OCI-LY7 (cell line): ENCODE measurements at regions of chr6 and their contacts with region 1.

Region 1: GRCh38 chr6:8063761-8064637 is at the start of gene BLOC1S5:
- DNase-seq: peak; percentile 98
- H3K4me3 ChIP-seq: peak within 1 kb of the TSS; percentile 94
- H3K27ac ChIP-seq: peak within 1 kb of the TSS; percentile 64
- H3K4me1 ChIP-seq: peaks cover 27% of the 10 kb centered on the region
- CTCF ChIP-seq: no peak; the same call in 1 of the 2 replicates
- total RNA-seq, gene BLOC1S5: 22.6 and 30.0 TPM in 2 replicates

Region 2: GRCh38 chr6:7389451-7390225 is 674.4 kb before region 1 on chr6 and contains the starts of genes CAGE1 and RIOK1:
- CTCF ChIA-PET with region 1: no interaction called
- POLR2A ChIA-PET with region 1: no interaction called
- intact Hi-C with region 1: loop called (anchors 5 kb)
- DNase-seq: peak; percentile 94
- H3K4me3 ChIP-seq: peak within 1 kb of the TSS; percentile 83
- H3K27ac ChIP-seq: peak within 1 kb of the TSS; percentile 84
- H3K4me1 ChIP-seq: peaks cover 21% of the 10 kb centered on the region
- CTCF ChIP-seq: no peak
- total RNA-seq, gene CAGE1: 0.44 and 1.1 TPM in 2 replicates
- total RNA-seq, gene RIOK1: 55.0 and 85.0 TPM in 2 replicates

Region 3: DNA sequence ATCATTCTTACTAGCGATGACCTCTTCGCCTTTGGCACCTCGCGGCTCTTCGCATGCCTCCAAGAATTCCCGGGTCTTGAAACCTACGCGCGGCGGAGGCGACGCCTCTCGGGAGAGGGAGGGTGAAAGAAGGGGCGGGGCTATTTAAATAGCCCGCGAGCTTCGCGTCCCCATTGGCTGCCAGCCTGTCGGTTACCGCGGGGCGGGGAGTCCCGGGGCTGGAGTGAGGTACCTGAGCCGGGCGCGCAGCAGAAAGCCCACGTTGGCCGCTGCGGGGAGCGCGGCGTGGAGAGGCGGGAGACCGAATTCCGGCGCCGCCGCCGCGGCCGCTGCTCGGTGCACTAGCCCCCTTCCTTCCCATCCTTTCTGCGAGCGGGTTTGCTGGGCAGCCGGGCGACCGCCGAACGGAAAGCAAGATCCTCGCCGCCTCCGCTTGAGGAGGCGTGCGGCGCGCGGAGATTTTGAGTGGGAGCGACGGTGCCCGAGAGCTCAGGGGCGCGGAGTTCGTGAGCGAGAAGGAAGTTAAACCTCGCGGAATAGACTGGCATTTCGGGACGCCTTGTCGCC is 338.1 kb before region 1 on chr6 and contains the start of gene BMP6:
- CTCF ChIA-PET with region 1: no interaction called
- POLR2A ChIA-PET with region 1: no interaction called
- intact Hi-C with region 1: loop called (anchors 2 kb)
- DNase-seq: peak; percentile 69
- H3K4me3 ChIP-seq: peak within 1 kb of the TSS; percentile 64
- H3K27ac ChIP-seq: no peak within 1 kb of the TSS
- H3K4me1 ChIP-seq: peaks cover 19% of the 10 kb centered on the region
- CTCF ChIP-seq: no peak
- total RNA-seq, gene BMP6: 0.10 and 0.38 TPM in 2 replicates

Region 4: GRCh38 chr6:7899101-7899888 is 164.7 kb before region 1 on chr6:
- CTCF ChIA-PET with region 1: no interaction called
- POLR2A ChIA-PET with region 1: interaction called, 4 read pairs
- intact Hi-C with region 1: loop called (anchors 5 kb)
- DNase-seq: peak; percentile 59
- H3K4me3 ChIP-seq: no peak overlapping the region
- H3K27ac ChIP-seq: peak overlapping the region; percentile 78
- H3K4me1 ChIP-seq: peaks cover 65% of the 10 kb centered on the region
- CTCF ChIP-seq: peak; percentile 76

Region 5: DNA sequence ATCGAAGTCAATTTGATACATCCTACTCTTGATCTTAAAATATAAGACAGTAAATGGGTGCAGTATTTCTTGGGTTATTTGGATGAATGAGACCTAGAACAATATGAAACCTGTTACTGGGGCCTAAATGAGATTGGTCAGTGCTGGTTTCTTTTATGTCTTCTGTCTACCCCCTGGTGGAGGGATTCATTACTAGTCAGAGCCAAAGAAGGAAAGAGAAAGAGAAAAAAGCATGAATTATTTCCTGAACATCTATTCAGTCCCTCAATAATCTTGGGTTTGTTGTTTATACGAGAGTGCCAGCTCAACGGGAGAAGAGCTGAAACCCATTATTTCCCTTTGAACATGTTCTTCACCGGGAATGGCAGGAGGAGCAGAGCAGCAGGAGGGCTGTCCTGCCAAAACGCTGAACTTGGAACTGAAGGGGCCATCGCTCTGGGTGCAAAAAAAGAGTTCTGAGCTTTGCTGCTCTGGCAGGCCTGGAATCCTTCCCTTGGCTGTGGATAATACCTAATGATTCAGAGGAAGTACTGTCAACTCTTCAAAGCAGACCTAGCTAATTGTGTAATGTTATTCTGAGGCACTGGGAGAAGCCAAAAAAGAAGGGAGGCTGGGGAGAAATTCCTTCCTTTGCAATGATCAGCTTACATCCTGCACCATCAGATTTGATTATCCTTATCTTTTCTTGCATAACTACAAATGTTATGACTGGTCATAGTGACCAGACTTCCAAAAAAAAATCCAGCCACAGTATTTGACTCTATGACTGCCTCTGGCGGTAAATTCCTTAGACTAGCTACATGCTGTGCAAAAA is 71.8 kb before region 1 on chr6:
- CTCF ChIA-PET with region 1: no interaction called
- POLR2A ChIA-PET with region 1: no interaction called
- intact Hi-C with region 1: loop called (anchors 2 kb)
- DNase-seq: peak; percentile 76
- H3K4me3 ChIP-seq: no peak overlapping the region
- H3K27ac ChIP-seq: no peak overlapping the region
- H3K4me1 ChIP-seq: peaks cover 10% of the 10 kb centered on the region
- CTCF ChIP-seq: peak; percentile 89

Region 6: GRCh38 chr6:8047541-8048292 is 16.3 kb before region 1 on chr6:
- CTCF ChIA-PET with region 1: no interaction called
- POLR2A ChIA-PET with region 1: no interaction called
- intact Hi-C with region 1: no loop called
- DNase-seq: no peak
- H3K4me3 ChIP-seq: no peak overlapping the region
- H3K27ac ChIP-seq: no peak overlapping the region
- H3K4me1 ChIP-seq: no peaks in the 10 kb centered on the region
- CTCF ChIP-seq: no peak

Region 7: GRCh38 chr6:8102122-8102958 is 38.3 kb after region 1 on chr6 and contains the start of gene EEF1E1:
- CTCF ChIA-PET with region 1: interaction called, 3 read pairs
- POLR2A ChIA-PET with region 1: interaction called, 22 read pairs
- intact Hi-C with region 1: loop called (anchors 1 kb)
- DNase-seq: peak; percentile 97
- H3K4me3 ChIP-seq: peak within 1 kb of the TSS; percentile 81
- H3K27ac ChIP-seq: peak within 1 kb of the TSS; percentile 47
- H3K4me1 ChIP-seq: peaks cover 19% of the 10 kb centered on the region
- CTCF ChIP-seq: no peak
- total RNA-seq, gene EEF1E1: 54.6 and 70.9 TPM in 2 replicates

Region 8: DNA sequence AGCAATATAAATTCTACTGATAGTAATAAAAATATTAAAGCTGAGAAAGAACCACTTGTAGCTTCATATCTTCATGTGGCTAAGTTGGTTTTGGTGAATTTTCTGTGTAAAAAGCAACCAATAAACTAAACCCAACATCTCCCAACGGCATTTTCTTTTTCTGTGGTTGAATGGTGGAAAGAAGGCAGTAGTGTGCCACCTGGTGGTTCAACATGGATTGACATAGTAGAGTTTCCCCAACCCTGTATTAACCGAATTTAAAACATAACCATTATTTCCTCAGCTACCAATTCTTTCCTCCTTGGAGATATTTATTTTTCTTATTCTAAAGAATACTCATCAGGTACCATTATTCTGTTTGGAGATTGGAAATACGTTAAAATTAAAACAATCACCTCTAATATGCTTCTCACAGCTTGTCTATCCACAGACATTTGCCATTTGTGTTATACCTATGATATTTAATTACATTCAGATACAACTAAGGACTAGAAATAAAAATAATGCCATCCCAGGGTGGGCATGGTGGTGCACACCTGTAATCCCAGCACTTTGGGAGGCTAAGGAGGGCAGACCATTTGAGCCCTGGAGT is 155.4 kb after region 1 on chr6:
- CTCF ChIA-PET with region 1: no interaction called
- POLR2A ChIA-PET with region 1: interaction called, 3 read pairs
- intact Hi-C with region 1: loop called (anchors 5 kb)
- DNase-seq: peak; percentile 43
- H3K4me3 ChIP-seq: no peak overlapping the region
- H3K27ac ChIP-seq: no peak overlapping the region
- H3K4me1 ChIP-seq: no peaks in the 10 kb centered on the region
- CTCF ChIP-seq: peak; percentile 88